ENCODE measurements at regions of chr4 and their contacts with region 1.

Region 1: DNA sequence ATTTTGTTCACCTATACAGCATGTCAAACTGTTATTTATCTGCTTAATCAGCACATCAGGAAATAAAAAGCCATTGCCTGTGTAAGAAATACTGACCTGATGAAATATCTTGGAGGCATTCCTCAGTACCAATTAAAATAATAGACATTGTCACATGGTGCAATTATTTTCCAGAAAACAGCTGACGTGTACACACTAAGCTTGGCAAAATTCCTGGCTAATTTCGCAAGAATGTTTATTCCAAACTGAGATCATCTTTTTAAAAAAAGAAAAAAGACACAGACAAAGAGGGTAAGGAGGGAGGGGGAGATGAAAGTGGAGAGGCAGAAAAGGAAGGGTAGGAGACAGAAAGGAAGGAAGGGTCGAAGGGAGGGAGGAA is 61.9 kb upstream of the NFKB1 start:
- DNase-seq: no peak
- H3K4me3 ChIP-seq: no peak overlapping the region
- H3K27ac ChIP-seq: peak overlapping the region in 1 of 8 donors; percentile 41
- H3K4me1 ChIP-seq: peaks cover 0 to 6% (median 0%) of the 10 kb centered on the region in 6 donors
- H3K27me3 ChIP-seq: no peaks in the 10 kb centered on the region
- CTCF ChIP-seq: no peak
- POLR2A ChIP-seq: no peak

Region 2: GRCh38 chr4:102344954-102345794 is 94.1 kb before region 1 on chr4 and contains the start of gene SLC39A8:
- intact Hi-C with region 1: loop called (anchors 10 kb)
- DNase-seq: peak; percentile 97
- H3K4me3 ChIP-seq: peak within 1 kb of the TSS; percentile 66 to 81 (median 72)
- H3K27ac ChIP-seq: peak within 1 kb of the TSS; percentile 79 to 92 (median 84)
- H3K4me1 ChIP-seq: peaks cover 8 to 58% (median 26%) of the 10 kb centered on the region in 6 donors
- H3K27me3 ChIP-seq: no peaks in the 10 kb centered on the region
- CTCF ChIP-seq: peak; percentile 78 to 95 (median 86)
- POLR2A ChIP-seq: peak in 1 of 3 donors; percentile 44
- total RNA-seq, gene SLC39A8: 11.9 to 21.7 (median 18.4) TPM

Measured in spleen (tissue), 13 donors.